ENCODE measurements at regions of chr12 and their contacts with region 1.

Region 1: GRCh38 chr12:12032851-12033588 is 37.7 kb upstream of the BCL2L14 start:
- DNase-seq: peak; percentile 19 to 83 (median 55)
- ATAC-seq: peak; percentile 79 to 86 (median 82)
- H3K4me3 ChIP-seq: peak overlapping the region; percentile 61 to 78
- H3K4me3 Mint-ChIP-seq: peak overlapping the region; percentile 72 to 81 (median 77)
- H3K27ac ChIP-seq: peak overlapping the region; percentile 33
- H3K27ac Mint-ChIP-seq: peak overlapping the region; percentile 79 to 83
- H3K4me1 ChIP-seq: peaks cover 4 to 18% of the 10 kb centered on the region in 2 experiments
- H3K4me1 Mint-ChIP-seq: peaks cover 15 to 20% (median 20%) of the 10 kb centered on the region in 3 donors
- H3K27me3 ChIP-seq: no peaks in the 10 kb centered on the region
- H3K27me3 Mint-ChIP-seq: peaks cover 0 to 4% of the 10 kb centered on the region in 2 donors

Region 2: GRCh38 chr12:11581179-11581755 is 451.8 kb before region 1 on chr12:
- CTCF ChIA-PET with region 1: interaction called, 54 to 108 read pairs
- POLR2A ChIA-PET with region 1: no interaction called
- DNase-seq: peak in 34 of 35 experiments; percentile 6 to 85 (median 58)
- ATAC-seq: no peak
- H3K4me3 ChIP-seq: no peak overlapping the region
- H3K4me3 Mint-ChIP-seq: no peak overlapping the region
- H3K27ac ChIP-seq: no peak overlapping the region
- H3K27ac Mint-ChIP-seq: no peak overlapping the region
- H3K4me1 ChIP-seq: peaks cover 0 to 3% of the 10 kb centered on the region in 2 experiments
- H3K4me1 Mint-ChIP-seq: peaks cover 2 to 5% (median 2%) of the 10 kb centered on the region in 3 donors
- H3K27me3 ChIP-seq: no peaks in the 10 kb centered on the region
- H3K27me3 Mint-ChIP-seq: peaks cover 2 to 3% of the 10 kb centered on the region in 2 donors

Region 3: DNA sequence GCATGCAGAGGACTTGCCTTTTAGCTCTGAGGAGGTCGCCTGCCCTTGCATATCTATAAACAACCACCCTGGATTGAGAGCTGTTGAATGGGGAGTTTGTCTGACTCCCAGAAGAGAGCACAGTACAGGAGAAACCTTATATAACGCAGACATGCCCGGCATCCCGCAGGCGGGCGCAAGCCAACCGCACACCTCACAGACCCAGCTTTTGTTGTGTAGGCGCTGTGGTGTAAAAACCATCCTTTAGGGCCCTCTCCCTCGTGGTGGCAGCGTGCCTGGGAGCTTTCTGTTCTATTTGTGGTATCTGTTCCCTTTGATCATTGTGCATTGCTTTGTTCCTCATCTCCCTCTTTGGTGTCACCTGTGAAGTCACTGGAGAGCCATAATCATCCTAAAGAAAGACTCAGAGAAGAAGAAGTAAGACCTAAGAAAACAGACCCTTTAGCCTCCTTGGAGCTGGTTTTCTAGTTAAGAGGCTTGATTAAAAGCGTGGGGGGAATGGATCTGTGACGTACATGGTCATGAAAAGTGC is 305.8 kb before region 1 on chr12:
- CTCF ChIA-PET with region 1: interaction called in 1 of 2 experiments, 4 read pairs
- POLR2A ChIA-PET with region 1: interaction called in 1 of 2 experiments, 21 read pairs
- DNase-seq: peak; percentile 10 to 66 (median 39)
- ATAC-seq: peak; percentile 47 to 90 (median 66)
- H3K4me3 ChIP-seq: no peak overlapping the region
- H3K4me3 Mint-ChIP-seq: peak overlapping the region; percentile 0 to 57 (median 1)
- H3K27ac ChIP-seq: peak overlapping the region; percentile 16
- H3K27ac Mint-ChIP-seq: peak overlapping the region; percentile 68 to 71
- H3K4me1 ChIP-seq: peaks cover 31 to 47% of the 10 kb centered on the region in 2 experiments
- H3K4me1 Mint-ChIP-seq: peaks cover 61 to 81% (median 75%) of the 10 kb centered on the region in 3 donors
- H3K27me3 ChIP-seq: no peaks in the 10 kb centered on the region
- H3K27me3 Mint-ChIP-seq: no peaks in the 10 kb centered on the region

Region 4: GRCh38 chr12:11991604-11992003 is 41.4 kb before region 1 on chr12:
- CTCF ChIA-PET with region 1: interaction called in 1 of 2 experiments, 3 read pairs
- POLR2A ChIA-PET with region 1: interaction called in 1 of 2 experiments, 13 read pairs
- DNase-seq: no peak
- ATAC-seq: no peak
- H3K4me3 ChIP-seq: no peak overlapping the region
- H3K4me3 Mint-ChIP-seq: no peak overlapping the region
- H3K27ac ChIP-seq: no peak overlapping the region
- H3K27ac Mint-ChIP-seq: no peak overlapping the region
- H3K4me1 ChIP-seq: no peaks in the 10 kb centered on the region
- H3K4me1 Mint-ChIP-seq: peaks cover 6 to 10% (median 9%) of the 10 kb centered on the region in 3 donors
- H3K27me3 ChIP-seq: no peaks in the 10 kb centered on the region
- H3K27me3 Mint-ChIP-seq: no peaks in the 10 kb centered on the region

Region 5: GRCh38 chr12:12070674-12071656 is 37.9 kb after region 1 on chr12 and contains the start of gene BCL2L14:
- CTCF ChIA-PET with region 1: no interaction called
- POLR2A ChIA-PET with region 1: no interaction called
- DNase-seq: peak in 2 of 35 experiments; percentile 5 to 37
- ATAC-seq: peak; percentile 47 to 66 (median 56)
- H3K4me3 ChIP-seq: peak within 1 kb of the TSS in 1 of 2 donors; percentile 16
- H3K4me3 Mint-ChIP-seq: peak within 1 kb of the TSS; percentile 69 to 78 (median 72)
- H3K27ac ChIP-seq: no peak within 1 kb of the TSS
- H3K27ac Mint-ChIP-seq: peak within 1 kb of the TSS; percentile 82 to 85
- H3K4me1 ChIP-seq: peaks cover 0 to 18% of the 10 kb centered on the region in 2 experiments
- H3K4me1 Mint-ChIP-seq: peaks cover 23 to 28% (median 24%) of the 10 kb centered on the region in 3 donors
- H3K27me3 ChIP-seq: peaks cover 0 to 4% of the 10 kb centered on the region in 2 experiments
- H3K27me3 Mint-ChIP-seq: peaks cover 2 to 3% of the 10 kb centered on the region in 2 donors
- total RNA-seq, gene BCL2L14: 0.47 to 1.1 (median 0.77) TPM in 4 of 5 donors, not detected in the other

Region 6: GRCh38 chr12:12115514-12115913 is 82.5 kb after region 1 on chr12:
- CTCF ChIA-PET with region 1: no interaction called
- POLR2A ChIA-PET with region 1: no interaction called
- DNase-seq: no peak
- ATAC-seq: no peak
- H3K4me3 ChIP-seq: no peak overlapping the region
- H3K4me3 Mint-ChIP-seq: no peak overlapping the region
- H3K27ac ChIP-seq: no peak overlapping the region
- H3K27ac Mint-ChIP-seq: no peak overlapping the region
- H3K4me1 ChIP-seq: no peaks in the 10 kb centered on the region
- H3K4me1 Mint-ChIP-seq: no peaks in the 10 kb centered on the region
- H3K27me3 ChIP-seq: no peaks in the 10 kb centered on the region
- H3K27me3 Mint-ChIP-seq: no peaks in the 10 kb centered on the region

Region 7: DNA sequence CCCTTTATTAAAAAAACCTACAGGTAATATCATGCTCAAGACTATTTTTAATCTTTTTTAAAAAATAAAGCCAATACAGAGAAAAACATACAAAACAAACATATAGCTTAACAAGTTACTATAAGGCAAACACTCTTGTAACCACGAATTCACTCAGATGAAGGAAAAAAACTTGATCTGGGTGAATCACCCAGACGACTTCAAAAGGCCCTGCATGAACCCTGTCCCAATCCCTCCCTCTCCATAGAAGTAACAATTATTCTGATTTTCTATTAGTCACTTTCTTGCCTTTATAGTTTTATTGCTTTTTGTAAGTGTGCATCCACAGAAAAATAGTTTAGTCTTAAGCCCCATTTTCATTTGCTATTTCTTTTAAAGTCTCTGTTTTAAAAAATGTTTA is 161.2 kb after region 1 on chr12:
- CTCF ChIA-PET with region 1: no interaction called
- POLR2A ChIA-PET with region 1: no interaction called
- DNase-seq: no peak
- ATAC-seq: no peak
- H3K4me3 ChIP-seq: no peak overlapping the region
- H3K4me3 Mint-ChIP-seq: no peak overlapping the region
- H3K27ac ChIP-seq: no peak overlapping the region
- H3K27ac Mint-ChIP-seq: no peak overlapping the region
- H3K4me1 ChIP-seq: no peaks in the 10 kb centered on the region
- H3K4me1 Mint-ChIP-seq: no peaks in the 10 kb centered on the region
- H3K27me3 ChIP-seq: peaks cover 0 to 4% of the 10 kb centered on the region in 2 experiments
- H3K27me3 Mint-ChIP-seq: peaks cover 4 to 12% of the 10 kb centered on the region in 2 donors

Region 8: DNA sequence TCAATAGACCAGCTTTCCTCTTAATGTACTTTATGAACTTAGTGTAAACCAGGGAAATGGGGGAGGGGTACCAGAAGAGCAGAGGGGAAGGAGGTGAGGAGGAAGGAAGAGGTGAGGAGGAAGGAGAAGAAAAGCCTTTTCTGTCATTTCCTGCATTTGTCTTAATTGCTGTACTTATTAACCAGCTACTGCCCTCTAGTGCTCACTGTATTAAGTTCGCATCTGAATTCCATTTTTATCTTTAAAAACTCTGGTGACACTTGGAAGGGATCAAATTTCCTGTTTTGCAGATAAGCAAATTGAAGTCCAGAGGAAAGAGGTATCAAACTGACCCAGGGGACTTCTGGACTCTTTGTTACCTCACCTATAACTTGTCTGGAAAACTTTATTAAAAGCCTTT is 294.8 kb after region 1 on chr12:
- CTCF ChIA-PET with region 1: interaction called, 3 to 14 read pairs
- POLR2A ChIA-PET with region 1: no interaction called
- DNase-seq: peak in 14 of 35 experiments; percentile 3 to 77 (median 15)
- ATAC-seq: peak; percentile 65 to 83 (median 80)
- H3K4me3 ChIP-seq: no peak overlapping the region
- H3K4me3 Mint-ChIP-seq: no peak overlapping the region
- H3K27ac ChIP-seq: no peak overlapping the region
- H3K27ac Mint-ChIP-seq: peak overlapping the region; percentile 57 to 82
- H3K4me1 ChIP-seq: peaks cover 0 to 5% of the 10 kb centered on the region in 2 experiments
- H3K4me1 Mint-ChIP-seq: peaks cover 8 to 10% (median 8%) of the 10 kb centered on the region in 3 donors
- H3K27me3 ChIP-seq: no peaks in the 10 kb centered on the region
- H3K27me3 Mint-ChIP-seq: no peaks in the 10 kb centered on the region

Region 9: DNA sequence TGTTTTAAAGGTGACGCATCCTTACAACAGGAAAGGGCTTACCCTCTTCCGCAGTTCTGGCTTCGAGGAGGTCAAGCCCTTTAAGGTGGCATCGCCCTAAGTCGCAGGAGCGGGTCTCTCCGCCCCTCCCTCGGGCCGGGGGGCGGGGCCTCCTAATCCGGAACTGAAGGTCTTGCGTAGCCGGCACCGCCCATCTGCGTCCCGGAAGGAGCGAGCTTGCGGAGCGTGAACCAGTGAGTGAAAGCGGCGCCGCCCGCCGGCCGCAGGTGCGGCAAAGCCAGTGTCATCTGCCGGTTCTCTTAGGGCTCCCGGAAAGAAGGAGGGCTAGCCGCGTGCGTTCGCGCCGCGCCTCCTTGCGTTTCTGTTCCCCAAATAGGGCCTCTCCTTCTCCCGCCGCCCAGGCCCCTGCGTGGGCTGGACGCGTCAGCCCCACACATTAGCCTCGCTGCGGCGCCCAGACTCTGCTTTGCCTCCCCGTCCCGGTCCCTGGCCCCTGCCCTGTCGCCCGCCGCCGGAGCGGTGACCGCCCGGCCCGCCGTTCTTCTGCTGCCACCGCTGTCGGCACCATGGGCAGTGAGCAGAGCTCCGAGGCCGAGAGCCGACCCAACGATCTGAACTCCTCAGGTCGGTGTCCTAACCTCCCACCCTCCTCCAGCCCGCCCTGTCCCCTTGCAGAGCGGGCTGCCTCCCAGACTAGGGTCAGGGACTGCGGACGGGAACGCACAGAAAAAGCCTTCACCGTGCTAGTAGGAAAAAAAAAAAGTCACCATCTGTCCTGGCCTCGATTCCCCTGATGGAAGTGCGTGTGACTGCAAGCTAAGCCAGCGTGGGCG is 324.1 kb after region 1 on chr12 and contains the start of gene BORCS5:
- CTCF ChIA-PET with region 1: interaction called in 1 of 2 experiments, 11 read pairs
- POLR2A ChIA-PET with region 1: no interaction called
- DNase-seq: peak; percentile 97 to 99 (median 98)
- ATAC-seq: peak; percentile 90 to 96 (median 91)
- H3K4me3 ChIP-seq: peak within 1 kb of the TSS; percentile 59 to 73
- H3K4me3 Mint-ChIP-seq: peak within 1 kb of the TSS; percentile 87 to 96 (median 93)
- H3K27ac ChIP-seq: peak within 1 kb of the TSS; percentile 90
- H3K27ac Mint-ChIP-seq: peak within 1 kb of the TSS; percentile 94 to 96
- H3K4me1 ChIP-seq: peaks cover 13 to 36% of the 10 kb centered on the region in 2 experiments
- H3K4me1 Mint-ChIP-seq: peaks cover 50 to 58% (median 54%) of the 10 kb centered on the region in 3 donors
- H3K27me3 ChIP-seq: no peaks in the 10 kb centered on the region
- H3K27me3 Mint-ChIP-seq: no peaks in the 10 kb centered on the region
- total RNA-seq, gene BORCS5: 18.0 to 34.0 (median 25.5) TPM

Region 10: DNA sequence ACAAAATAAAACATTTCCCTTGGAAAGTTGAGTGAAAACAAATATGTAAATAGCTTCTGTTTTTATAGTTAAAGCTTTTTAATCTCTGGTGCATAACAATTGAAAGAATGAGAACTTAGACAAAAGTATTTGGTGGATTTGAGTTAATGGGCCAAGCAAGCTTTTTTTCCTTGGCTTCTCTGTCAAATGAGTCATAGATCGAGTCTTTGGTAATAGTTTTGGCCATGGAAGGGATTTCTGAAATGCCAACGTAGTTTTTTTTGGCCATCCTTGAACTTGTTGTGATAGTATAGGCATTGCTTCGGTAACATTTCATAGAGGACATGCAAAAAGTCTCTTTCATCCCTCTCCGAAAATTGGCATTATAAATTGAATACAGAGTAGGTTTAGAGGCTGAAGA is 628.1 kb after region 1 on chr12:
- CTCF ChIA-PET with region 1: interaction called in 1 of 2 experiments, 16 read pairs
- POLR2A ChIA-PET with region 1: no interaction called
- DNase-seq: no peak
- ATAC-seq: no peak
- H3K4me3 ChIP-seq: no peak overlapping the region
- H3K4me3 Mint-ChIP-seq: no peak overlapping the region
- H3K27ac ChIP-seq: no peak overlapping the region
- H3K27ac Mint-ChIP-seq: no peak overlapping the region
- H3K4me1 ChIP-seq: peaks cover 0 to 2% of the 10 kb centered on the region in 2 experiments
- H3K4me1 Mint-ChIP-seq: peaks cover under 1% of the 10 kb centered on the region in 3 donors
- H3K27me3 ChIP-seq: no peaks in the 10 kb centered on the region
- H3K27me3 Mint-ChIP-seq: no peaks in the 10 kb centered on the region